ENCODE measurements at regions of chr14 and their contacts with region 1.

Region 1: DNA sequence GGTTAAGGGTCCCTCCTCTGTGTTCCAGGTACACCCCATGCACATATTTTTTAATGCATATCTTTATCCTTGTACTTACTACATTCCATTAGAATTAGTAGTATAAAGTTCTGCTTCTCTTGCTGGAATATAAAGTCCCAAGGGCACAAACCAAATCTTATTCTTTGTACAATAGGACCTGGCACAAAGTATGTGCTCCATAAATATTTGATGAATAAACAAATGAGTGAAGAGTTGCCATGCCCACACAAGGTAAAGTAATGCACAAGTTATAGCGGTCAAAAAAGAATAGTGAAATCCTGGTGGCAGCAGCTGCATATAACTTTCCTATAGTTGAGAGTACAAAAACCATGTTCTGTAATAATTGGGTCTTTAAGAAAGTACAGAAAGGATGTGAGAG is 82.1 kb upstream of the BMP4 start:
- DNase-seq: no peak
- H3K4me3 ChIP-seq: no peak overlapping the region
- H3K27ac ChIP-seq: no peak overlapping the region
- H3K4me1 ChIP-seq: no peaks in the 10 kb centered on the region
- H3K27me3 ChIP-seq: no peaks in the 10 kb centered on the region
- CTCF ChIP-seq: no peak
- POLR2A ChIP-seq: no peak

Region 2: DNA sequence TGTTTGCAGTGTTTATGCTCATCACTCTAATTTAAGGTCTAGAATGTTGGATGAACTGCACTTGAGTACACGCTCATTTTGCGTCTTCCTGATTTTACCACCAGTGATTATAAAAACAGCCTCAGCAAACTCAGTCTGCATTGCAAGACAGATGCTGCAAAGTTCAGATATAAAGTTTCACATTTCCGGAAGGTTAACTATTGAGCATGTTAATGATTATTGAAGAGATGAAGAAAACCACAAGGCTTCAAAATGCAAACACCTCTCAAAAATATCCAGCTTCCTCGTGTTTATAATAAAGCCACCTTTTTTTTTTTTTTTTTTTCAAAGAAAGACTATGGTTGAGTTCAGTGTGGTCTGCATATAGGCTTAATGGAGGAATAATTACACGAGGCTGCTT is 10.0 kb after region 1 on chr14:
- CTCF ChIA-PET with region 1: no interaction called
- POLR2A ChIA-PET with region 1: interaction called, 10 read pairs
- dilution Hi-C with region 1: no loop called
- intact Hi-C with region 1: no loop called
- DNase-seq: no peak
- H3K4me3 ChIP-seq: no peak overlapping the region
- H3K27ac ChIP-seq: no peak overlapping the region
- H3K4me1 ChIP-seq: peaks cover 2% of the 10 kb centered on the region
- H3K27me3 ChIP-seq: no peaks in the 10 kb centered on the region
- CTCF ChIP-seq: no peak
- POLR2A ChIP-seq: no peak